ENCODE measurements at regions of chr1 and their contacts with region 1.

Region 1: DNA sequence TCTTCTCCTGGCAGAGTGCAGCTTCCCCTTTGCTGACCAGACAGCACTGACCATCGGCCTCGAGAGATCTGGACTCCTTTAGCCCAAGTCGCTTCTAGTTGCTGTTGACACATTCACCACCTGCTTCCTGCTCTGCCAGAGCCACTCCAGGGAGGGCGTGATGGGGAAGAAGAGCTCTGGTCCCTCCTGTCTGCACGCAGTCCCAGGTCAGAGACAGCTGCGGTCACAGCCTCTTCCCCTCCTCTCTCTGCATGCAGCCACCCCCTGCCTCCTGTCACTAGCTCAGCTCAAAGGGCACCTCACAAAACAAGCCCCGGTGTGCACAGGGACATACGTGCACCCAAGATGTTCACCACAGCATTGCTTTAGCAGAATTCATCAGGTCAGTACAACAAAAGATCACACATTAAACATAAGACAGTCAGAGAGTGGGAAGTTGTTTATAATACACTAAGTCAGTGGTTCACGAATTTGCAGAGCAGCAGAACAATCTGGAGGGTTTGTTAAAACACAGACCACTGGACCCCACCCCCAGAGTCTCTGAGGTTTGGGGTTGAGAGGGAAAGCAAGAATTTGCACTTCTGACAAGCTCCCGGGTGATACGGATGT is 132.9 kb downstream of the SYF2 start:
- DNase-seq: peak; percentile 61
- H3K4me3 Mint-ChIP-seq: peak overlapping the region; percentile 52
- H3K27ac Mint-ChIP-seq: peak overlapping the region; percentile 89
- H3K4me1 Mint-ChIP-seq: peaks cover 75% of the 10 kb centered on the region
- H3K27me3 Mint-ChIP-seq: peaks cover 9% of the 10 kb centered on the region

Region 2: GRCh38 chr1:24847995-24848881 is 251.2 kb before region 1 on chr1:
- CTCF ChIA-PET with region 1: interaction called, 23 read pairs
- POLR2A ChIA-PET with region 1: no interaction called
- DNase-seq: peak; percentile 91
- H3K4me3 Mint-ChIP-seq: peak overlapping the region; percentile 60
- H3K27ac Mint-ChIP-seq: peak overlapping the region; percentile 77
- H3K4me1 Mint-ChIP-seq: peaks cover 30% of the 10 kb centered on the region
- H3K27me3 Mint-ChIP-seq: peaks cover 47% of the 10 kb centered on the region